GM10248 (cell line): ENCODE measurements at regions of chr5 and their contacts with region 1.

Region 1: GRCh38 chr5:72366324-72366976 is 46.3 kb downstream of the PTCD2 start:
- DNase-seq: peak; percentile 49
- CTCF ChIP-seq: peak; percentile 71

Region 2: GRCh38 chr5:72205431-72206009 is 160.9 kb before region 1 on chr5:
- CTCF ChIA-PET with region 1: no interaction called
- POLR2A ChIA-PET with region 1: no interaction called
- DNase-seq: no peak
- CTCF ChIP-seq: no peak

Region 3: GRCh38 chr5:72347801-72348305 is 18.6 kb before region 1 on chr5:
- CTCF ChIA-PET with region 1: interaction called, 12 read pairs
- POLR2A ChIA-PET with region 1: no interaction called
- DNase-seq: no peak
- CTCF ChIP-seq: no peak

Region 4: GRCh38 chr5:72378636-72379290 is 12.3 kb after region 1 on chr5:
- CTCF ChIA-PET with region 1: interaction called, 26 read pairs
- POLR2A ChIA-PET with region 1: no interaction called
- DNase-seq: no peak
- CTCF ChIP-seq: no peak

Region 5: DNA sequence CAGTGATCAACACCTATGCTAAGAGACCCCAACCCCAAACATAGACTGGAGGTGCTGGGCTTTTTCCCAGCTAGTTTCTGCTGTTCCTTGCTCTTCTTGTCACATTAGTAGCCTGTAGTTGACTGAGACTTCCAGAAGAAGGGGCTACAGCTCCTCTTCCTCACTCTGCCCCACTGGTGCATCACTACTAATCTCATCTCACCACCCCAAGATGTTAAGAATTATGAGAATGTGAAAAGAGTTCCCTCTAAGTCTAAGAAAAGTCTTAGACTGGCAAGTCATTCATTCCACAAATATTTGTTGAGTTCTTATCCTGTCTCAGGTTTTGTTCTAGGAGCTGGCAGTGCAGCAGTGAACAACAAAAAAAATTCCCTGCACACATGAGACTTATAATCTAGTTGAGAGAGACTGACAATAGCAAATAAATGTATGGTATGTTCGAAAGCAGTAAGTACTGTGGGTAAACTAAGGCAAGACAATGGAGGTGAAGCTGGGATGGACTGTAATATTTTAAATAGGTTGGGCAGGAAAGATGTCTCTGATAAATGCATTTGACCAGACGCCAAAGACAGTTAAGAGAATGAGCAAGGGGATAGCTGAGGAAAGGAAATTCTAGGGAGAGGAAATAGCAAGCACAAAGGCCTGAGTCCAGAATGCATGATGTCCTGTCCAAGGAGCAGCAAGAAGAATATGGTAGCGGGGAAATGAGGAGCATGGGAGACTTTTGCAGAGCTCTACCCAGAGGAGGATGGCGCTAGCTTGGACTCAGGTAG is 46.0 kb after region 1 on chr5:
- CTCF ChIA-PET with region 1: interaction called, 10 read pairs
- POLR2A ChIA-PET with region 1: no interaction called
- DNase-seq: no peak
- CTCF ChIP-seq: no peak

Region 6: DNA sequence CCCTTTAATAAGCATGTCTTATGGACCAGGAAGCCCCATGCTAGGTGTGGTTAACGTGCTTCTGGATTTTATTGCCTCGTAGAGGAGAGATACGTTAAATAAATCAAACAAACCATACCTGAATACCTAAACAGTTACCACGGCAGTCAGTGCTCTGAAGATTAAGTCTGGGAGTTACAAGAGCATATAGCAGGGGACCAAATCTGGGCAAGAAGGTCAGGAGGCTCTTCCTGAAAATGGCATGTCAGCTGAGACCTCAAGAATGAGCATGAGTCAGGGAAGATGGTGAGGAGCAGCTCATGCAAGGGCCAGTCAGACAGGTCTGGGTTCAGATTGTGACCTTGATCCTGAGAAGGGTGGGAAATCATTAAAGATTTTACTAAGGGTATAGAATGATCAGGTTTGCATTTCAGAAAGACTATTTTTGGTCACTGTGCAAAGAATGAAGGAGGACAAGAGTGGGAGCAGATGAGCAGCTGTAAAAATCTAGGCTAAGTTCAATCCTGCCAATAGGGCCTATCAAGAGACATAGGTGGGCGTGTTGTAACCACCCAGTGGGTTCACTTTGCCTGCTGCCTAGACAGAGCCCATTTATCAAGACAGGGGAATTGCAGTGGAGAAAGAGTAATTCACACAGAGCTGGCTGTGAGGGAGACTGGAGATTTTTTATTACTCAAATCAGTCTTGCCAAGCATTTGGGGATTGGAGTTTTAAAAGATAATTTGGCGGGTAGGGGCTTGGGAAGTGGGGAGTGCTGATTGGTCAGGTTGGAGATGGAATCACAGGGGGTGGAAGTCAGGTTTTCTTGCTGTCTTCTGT is 145.5 kb after region 1 on chr5:
- CTCF ChIA-PET with region 1: interaction called, 20 read pairs
- POLR2A ChIA-PET with region 1: no interaction called
- DNase-seq: no peak
- CTCF ChIP-seq: no peak

Region 7: DNA sequence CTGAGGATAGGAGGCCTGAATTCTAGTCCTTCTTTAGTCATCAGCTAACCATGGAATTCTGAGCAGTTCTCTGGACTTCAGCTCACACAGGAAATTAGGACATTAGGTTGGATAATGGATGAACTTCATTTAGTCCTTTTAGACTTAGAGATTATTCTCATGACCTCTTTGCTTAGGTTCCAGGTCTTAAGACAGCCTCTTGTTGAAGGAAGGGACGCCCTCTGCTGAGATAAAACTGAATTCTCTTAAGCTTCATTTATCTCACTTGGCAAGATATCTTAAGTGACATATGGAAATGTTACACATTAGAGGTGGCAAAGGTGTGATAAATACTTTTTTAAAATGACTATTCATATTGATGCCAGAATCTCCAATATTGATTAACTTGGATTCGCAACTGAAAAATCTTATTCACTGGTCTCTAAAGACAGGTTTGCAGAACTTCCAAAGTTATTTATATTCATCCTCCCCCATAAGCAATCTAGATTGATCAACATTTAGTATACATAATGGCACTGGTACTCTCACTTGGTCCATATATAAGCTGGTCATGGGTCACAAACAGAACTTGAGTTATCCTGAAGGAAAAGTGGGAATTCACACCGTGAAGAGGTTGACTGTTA is 157.6 kb after region 1 on chr5:
- CTCF ChIA-PET with region 1: interaction called, 154 read pairs
- POLR2A ChIA-PET with region 1: no interaction called
- DNase-seq: peak; percentile 51
- CTCF ChIP-seq: peak; percentile 58

Region 8: GRCh38 chr5:72816311-72817145 is 450.1 kb after region 1 on chr5 and contains the start of gene TNPO1:
- CTCF ChIA-PET with region 1: interaction called, 35 read pairs
- POLR2A ChIA-PET with region 1: no interaction called
- DNase-seq: peak; percentile 92
- CTCF ChIP-seq: no peak